Endothelial cell of umbilical vein (primary cell): ENCODE measurements at regions of chr10 and their contacts with region 1.

Region 1: GRCh38 chr10:13987446-13987845 is 343.3 kb downstream of the FRMD4A start:
- DNase-seq: peak; percentile 73
- H3K4me3 ChIP-seq: no peak overlapping the region
- H3K27ac ChIP-seq: peak overlapping the region; percentile 71
- H3K4me1 ChIP-seq: peaks cover 76% of the 10 kb centered on the region
- H3K27me3 ChIP-seq: no peaks in the 10 kb centered on the region
- CTCF ChIP-seq: no peak
- POLR2A ChIP-seq: no peak

Region 2: DNA sequence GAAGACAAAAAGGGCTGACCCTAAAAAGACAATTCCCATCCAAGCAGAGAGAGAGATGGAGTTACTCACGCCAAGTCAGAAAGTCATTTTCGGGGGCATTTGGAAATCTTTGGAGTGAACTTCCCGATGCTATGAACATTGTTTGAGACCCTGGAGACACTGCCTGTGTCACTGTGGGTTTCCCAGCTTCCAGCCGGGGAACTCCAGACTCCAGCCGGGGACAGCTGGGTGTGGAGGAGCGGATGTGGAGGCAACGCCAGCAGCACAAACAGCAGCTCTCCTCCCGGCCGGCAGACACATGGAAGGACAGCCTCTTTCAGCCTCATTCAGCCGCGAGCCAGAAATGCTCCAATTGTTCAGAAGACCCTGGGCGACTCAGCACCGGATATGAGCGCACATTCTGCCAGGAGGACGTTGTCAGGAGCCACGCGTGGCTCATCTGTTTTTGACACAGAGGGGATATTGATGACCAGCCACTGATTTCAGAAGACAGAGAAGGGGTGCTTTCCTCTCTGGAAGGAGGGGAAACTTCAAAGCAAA is 303.1 kb before region 1 on chr10:
- CTCF ChIA-PET with region 1: no interaction called
- POLR2A ChIA-PET with region 1: no interaction called
- dilution Hi-C with region 1: no loop called
- intact Hi-C with region 1: loop called (anchors 1 kb)
- DNase-seq: peak; percentile 93
- H3K4me3 ChIP-seq: no peak overlapping the region
- H3K27ac ChIP-seq: peak overlapping the region; percentile 100
- H3K4me1 ChIP-seq: peaks cover 47% of the 10 kb centered on the region
- H3K27me3 ChIP-seq: no peaks in the 10 kb centered on the region
- CTCF ChIP-seq: no peak
- POLR2A ChIP-seq: no peak

Region 3: GRCh38 chr10:13939391-13939790 is 48.1 kb before region 1 on chr10:
- CTCF ChIA-PET with region 1: no interaction called
- POLR2A ChIA-PET with region 1: no interaction called
- dilution Hi-C with region 1: no loop called
- intact Hi-C with region 1: loop called (anchors 1 kb)
- DNase-seq: peak; percentile 89
- H3K4me3 ChIP-seq: no peak overlapping the region
- H3K27ac ChIP-seq: no peak overlapping the region
- H3K4me1 ChIP-seq: peaks cover 17% of the 10 kb centered on the region
- H3K27me3 ChIP-seq: no peaks in the 10 kb centered on the region
- CTCF ChIP-seq: no peak
- POLR2A ChIP-seq: no peak

Region 4: GRCh38 chr10:13961097-13961496 is 26.3 kb before region 1 on chr10:
- CTCF ChIA-PET with region 1: interaction called, 7 read pairs
- POLR2A ChIA-PET with region 1: interaction called, 8 read pairs
- dilution Hi-C with region 1: no loop called
- intact Hi-C with region 1: loop called (anchors 2 kb)
- DNase-seq: peak; percentile 47
- H3K4me3 ChIP-seq: no peak overlapping the region
- H3K27ac ChIP-seq: no peak overlapping the region
- H3K4me1 ChIP-seq: peaks cover 20% of the 10 kb centered on the region
- H3K27me3 ChIP-seq: no peaks in the 10 kb centered on the region
- CTCF ChIP-seq: no peak
- POLR2A ChIP-seq: no peak

Region 5: GRCh38 chr10:14074057-14074884 is 86.8 kb after region 1 on chr10:
- CTCF ChIA-PET with region 1: interaction called, 5 read pairs
- POLR2A ChIA-PET with region 1: no interaction called
- dilution Hi-C with region 1: no loop called
- intact Hi-C with region 1: loop called (anchors 1 kb)
- DNase-seq: peak; percentile 98
- H3K4me3 ChIP-seq: no peak overlapping the region
- H3K27ac ChIP-seq: peak overlapping the region; percentile 81
- H3K4me1 ChIP-seq: peaks cover 43% of the 10 kb centered on the region
- H3K27me3 ChIP-seq: no peaks in the 10 kb centered on the region
- CTCF ChIP-seq: no peak
- POLR2A ChIP-seq: no peak